ENCODE measurements at regions of chr18 and their contacts with region 1.

Region 1: GRCh38 chr18:37385846-37386778 is 179.5 kb downstream of the CELF4 start:
- DNase-seq: peak in 1 of 10 donors; percentile 27

Region 2: DNA sequence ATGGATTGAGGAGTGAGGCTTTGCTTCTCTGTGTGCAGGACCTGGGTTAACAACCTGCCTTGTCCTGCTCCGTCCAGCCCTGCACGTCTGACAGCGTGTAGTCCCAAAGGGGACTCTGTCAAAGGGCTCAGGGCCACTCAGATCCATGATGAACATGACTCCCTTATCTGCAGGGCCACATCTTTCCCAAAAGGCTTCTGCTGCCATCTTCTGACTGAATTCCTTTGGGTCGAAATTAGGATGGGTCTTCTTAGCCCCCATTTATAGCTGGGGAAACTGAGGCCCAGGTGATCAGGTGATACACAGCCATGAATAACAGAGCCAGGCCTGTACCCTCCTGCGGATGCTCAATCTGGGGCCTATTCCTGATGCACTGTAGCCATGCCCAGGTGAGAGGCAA is 70.3 kb after region 1 on chr18:
- intact Hi-C with region 1: loop called (anchors 1 kb)
- DNase-seq: no peak

Measured in posterior cingulate gyrus (tissue), 11 donors.